H1 (cell line): ENCODE measurements at regions of chr1 and their contacts with region 1.

Region 1: GRCh38 chr1:18875107-18875795 is 15.8 kb upstream of the TAS1R2 start:
- DNase-seq: peak; percentile 74 to 97
- H3K4me3 ChIP-seq: no peak overlapping the region
- H3K27ac ChIP-seq: no peak overlapping the region
- H3K4me1 ChIP-seq: peaks cover 0 to 6% (median 4%) of the 10 kb centered on the region in 4 experiments; a peak in 4 of 7 replicates
- H3K27me3 ChIP-seq: no peaks in the 10 kb centered on the region
- CTCF ChIP-seq: peak; percentile 93 to 100 (median 97)
- EP300 ChIP-seq: no peak
- POLR2A ChIP-seq: no peak
- RAD21 ChIP-seq: peak; percentile 88 to 91

Region 2: GRCh38 chr1:18820791-18821641 is 54.2 kb before region 1 on chr1:
- CTCF ChIA-PET with region 1: interaction called, 13 read pairs
- POLR2A ChIA-PET with region 1: no interaction called
- DNase-seq: peak; percentile 53 to 97
- H3K4me3 ChIP-seq: no peak overlapping the region
- H3K27ac ChIP-seq: no peak overlapping the region
- H3K4me1 ChIP-seq: peaks cover 3 to 10% (median 5%) of the 10 kb centered on the region in 4 experiments; a peak in 5 of 7 replicates
- H3K27me3 ChIP-seq: peaks cover 0 to 19% (median 15%) of the 10 kb centered on the region in 4 experiments; a peak in 6 of 7 replicates
- CTCF ChIP-seq: peak; percentile 93 to 99 (median 94)
- EP300 ChIP-seq: no peak
- POLR2A ChIP-seq: no peak
- RAD21 ChIP-seq: peak; percentile 96 to 97

Region 3: GRCh38 chr1:18849261-18849711 is 26.0 kb before region 1 on chr1:
- CTCF ChIA-PET with region 1: interaction called, 15 read pairs
- POLR2A ChIA-PET with region 1: no interaction called
- DNase-seq: no peak
- H3K4me3 ChIP-seq: no peak overlapping the region
- H3K27ac ChIP-seq: no peak overlapping the region
- H3K4me1 ChIP-seq: no peaks in the 10 kb centered on the region
- H3K27me3 ChIP-seq: peaks cover 0 to 9% (median 4%) of the 10 kb centered on the region in 4 experiments; a peak in 4 of 7 replicates
- CTCF ChIP-seq: no peak
- EP300 ChIP-seq: no peak
- POLR2A ChIP-seq: no peak
- RAD21 ChIP-seq: no peak

Region 4: GRCh38 chr1:18854331-18855025 is 20.8 kb before region 1 on chr1:
- CTCF ChIA-PET with region 1: interaction called, 16 read pairs
- POLR2A ChIA-PET with region 1: no interaction called
- DNase-seq: no peak
- H3K4me3 ChIP-seq: no peak overlapping the region
- H3K27ac ChIP-seq: no peak overlapping the region
- H3K4me1 ChIP-seq: no peaks in the 10 kb centered on the region
- H3K27me3 ChIP-seq: peaks cover 0 to 4% (median 3%) of the 10 kb centered on the region in 4 experiments; a peak in 5 of 7 replicates
- CTCF ChIP-seq: no peak
- EP300 ChIP-seq: no peak
- POLR2A ChIP-seq: no peak
- RAD21 ChIP-seq: peak in 1 of 2 experiments; percentile 15; a peak in 1 of 4 replicates

Region 5: GRCh38 chr1:18861082-18861481 is 14.2 kb before region 1 on chr1:
- CTCF ChIA-PET with region 1: interaction called, 20 read pairs
- POLR2A ChIA-PET with region 1: no interaction called
- DNase-seq: no peak
- H3K4me3 ChIP-seq: no peak overlapping the region
- H3K27ac ChIP-seq: no peak overlapping the region
- H3K4me1 ChIP-seq: no peaks in the 10 kb centered on the region
- H3K27me3 ChIP-seq: peaks cover 0 to 4% (median 0%) of the 10 kb centered on the region in 4 experiments; a peak in 2 of 7 replicates
- CTCF ChIP-seq: no peak
- EP300 ChIP-seq: no peak
- POLR2A ChIP-seq: no peak
- RAD21 ChIP-seq: no peak